Psoas muscle (tissue), 8 donors: ENCODE measurements at regions of chr5 and their contacts with region 1.

Region 1: GRCh38 chr5:119411935-119412602 is 40.2 kb upstream of the HSD17B4 start:
- DNase-seq: peak; percentile 18 to 58
- ATAC-seq: peak; percentile 89 to 99 (median 93)
- H3K4me3 ChIP-seq: peak overlapping the region; percentile 64
- H3K27ac ChIP-seq: no peak overlapping the region
- H3K4me1 ChIP-seq: no peaks in the 10 kb centered on the region
- H3K27me3 ChIP-seq: no peaks in the 10 kb centered on the region
- CTCF ChIP-seq: peak; percentile 94

Region 2: GRCh38 chr5:119070828-119071572 is 341.1 kb before region 1 on chr5 and contains the start of gene DMXL1:
- intact Hi-C with region 1: no loop called
- DNase-seq: peak; percentile 99 to 100
- ATAC-seq: peak; percentile 94 to 96 (median 96)
- H3K4me3 ChIP-seq: peak within 1 kb of the TSS; percentile 87
- H3K27ac ChIP-seq: peak within 1 kb of the TSS; percentile 98
- H3K4me1 ChIP-seq: peaks cover 30% of the 10 kb centered on the region
- H3K27me3 ChIP-seq: no peaks in the 10 kb centered on the region
- CTCF ChIP-seq: no peak
- total RNA-seq, gene DMXL1: 15.7 to 21.7 (median 18.3) TPM

Region 3: GRCh38 chr5:119179857-119180641 is 232.0 kb before region 1 on chr5:
- intact Hi-C with region 1: no loop called
- DNase-seq: no peak
- ATAC-seq: no peak
- H3K4me3 ChIP-seq: no peak overlapping the region
- H3K27ac ChIP-seq: no peak overlapping the region
- H3K4me1 ChIP-seq: no peaks in the 10 kb centered on the region
- H3K27me3 ChIP-seq: no peaks in the 10 kb centered on the region
- CTCF ChIP-seq: no peak

Region 4: DNA sequence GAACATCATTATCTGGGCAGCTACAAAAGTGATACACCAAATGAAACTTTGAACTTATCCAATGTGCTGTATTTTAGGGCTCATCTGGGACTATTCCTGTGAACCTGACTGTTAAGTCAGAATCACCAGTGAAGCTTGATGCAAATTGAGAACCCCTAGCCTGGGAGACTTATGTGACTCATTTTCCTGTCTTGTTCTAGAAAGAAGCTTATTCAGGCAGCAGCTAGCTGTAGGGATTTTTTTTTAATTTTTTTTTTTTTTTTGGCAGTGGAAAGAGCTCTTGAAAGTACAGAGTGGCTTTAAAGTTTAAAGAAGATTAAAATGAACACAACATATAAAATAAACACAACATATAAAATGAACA is 137.3 kb before region 1 on chr5:
- intact Hi-C with region 1: loop called in 1 of 2 experiments (anchors 10 kb)
- DNase-seq: no peak
- ATAC-seq: no peak
- H3K4me3 ChIP-seq: no peak overlapping the region
- H3K27ac ChIP-seq: no peak overlapping the region
- H3K4me1 ChIP-seq: no peaks in the 10 kb centered on the region
- H3K27me3 ChIP-seq: no peaks in the 10 kb centered on the region
- CTCF ChIP-seq: no peak

Region 5: DNA sequence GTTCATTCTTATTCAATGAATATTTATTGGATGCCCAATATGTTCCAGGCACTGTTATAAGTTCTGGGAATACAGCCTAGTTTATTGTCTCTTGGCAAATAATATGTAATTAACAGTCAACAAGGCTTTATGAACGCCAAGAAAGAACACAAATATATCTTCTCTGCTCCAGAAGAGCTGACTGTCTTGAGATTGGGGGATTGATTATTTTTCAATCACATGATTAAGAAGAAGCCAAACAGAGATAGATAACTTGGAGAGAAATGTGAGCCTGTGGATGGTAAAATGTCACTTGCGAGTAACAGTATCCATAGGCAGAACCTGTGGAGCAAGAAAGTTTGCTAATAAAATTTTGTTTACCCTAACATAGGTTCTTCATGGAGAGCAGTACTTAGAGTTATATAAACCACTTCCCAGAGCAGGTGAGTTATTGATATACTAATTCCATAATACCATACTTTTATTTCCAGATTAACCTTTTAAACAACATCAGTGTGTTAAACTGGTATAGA is 89.7 kb after region 1 on chr5:
- intact Hi-C with region 1: no loop called
- DNase-seq: no peak
- ATAC-seq: no peak
- H3K4me3 ChIP-seq: no peak overlapping the region
- H3K27ac ChIP-seq: no peak overlapping the region
- H3K4me1 ChIP-seq: no peaks in the 10 kb centered on the region
- H3K27me3 ChIP-seq: no peaks in the 10 kb centered on the region
- CTCF ChIP-seq: no peak